Activated naive CD4-positive, alpha-beta T cell treated with anti-CD3 and anti-CD28 coated beads for 36 hours (primary cell): ENCODE measurements at regions of chr19 and their contacts with region 1.

Region 1: DNA sequence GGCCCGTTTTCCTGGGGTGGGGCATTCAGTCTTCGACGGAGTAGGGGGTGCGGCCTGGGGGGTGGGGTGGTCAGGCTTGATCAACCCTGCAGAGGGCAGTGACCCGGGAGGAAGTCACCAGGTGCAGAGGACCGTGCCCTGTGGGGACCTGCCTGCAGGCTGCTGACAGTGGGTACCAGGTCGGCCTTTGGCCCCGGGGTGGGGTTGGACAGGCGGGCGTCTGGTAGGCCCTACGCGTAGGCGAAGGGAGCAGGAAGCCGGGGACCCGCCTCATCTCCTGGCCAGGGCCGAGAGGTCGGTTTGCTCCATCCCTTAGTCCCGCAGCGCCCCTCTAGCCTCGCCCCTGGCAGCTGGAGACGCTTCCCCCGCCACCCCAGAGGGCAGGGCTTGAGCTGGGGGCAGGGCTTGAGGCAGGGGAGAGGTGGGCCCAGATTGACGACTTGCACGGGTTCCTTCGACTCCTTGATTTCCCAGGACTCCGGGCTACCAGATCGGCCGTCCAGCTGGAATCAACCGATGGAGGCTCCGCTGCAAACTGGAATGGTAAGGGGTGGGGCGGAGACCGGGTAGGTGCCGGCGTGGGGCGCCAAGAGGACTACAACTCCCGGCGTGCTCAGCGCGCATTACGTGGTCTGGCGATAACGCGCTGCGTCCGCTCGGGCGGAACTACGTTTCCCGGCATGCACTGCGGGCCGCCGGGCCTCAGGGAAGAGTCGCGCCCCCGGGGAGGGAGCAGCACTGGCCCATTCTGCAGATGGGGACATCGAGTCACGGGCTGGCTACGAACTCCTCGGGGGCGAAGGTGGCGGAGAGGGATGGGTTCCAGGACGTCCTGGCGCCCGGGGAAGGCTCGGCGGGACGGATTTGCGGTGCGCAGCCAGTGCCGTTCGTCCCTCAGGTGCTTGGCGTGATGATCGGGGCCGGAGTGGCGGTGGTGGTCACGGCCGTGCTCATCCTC is at the start of gene PNPLA6:
- DNase-seq: peak; percentile 95
- H3K4me3 Mint-ChIP-seq: peak within 1 kb of the TSS; percentile 92
- H3K27ac Mint-ChIP-seq: peak within 1 kb of the TSS; percentile 84
- H3K4me1 Mint-ChIP-seq: peaks cover 20% of the 10 kb centered on the region
- H3K27me3 Mint-ChIP-seq: no peaks in the 10 kb centered on the region
- total RNA-seq, gene PNPLA6: 75.5 to 81.7 TPM

Region 2: GRCh38 chr19:7355151-7355820 is 180.0 kb before region 1 on chr19:
- CTCF ChIA-PET with region 1: interaction called, 5 read pairs
- intact Hi-C with region 1: loop called (anchors 2 kb)
- DNase-seq: no peak
- H3K4me3 Mint-ChIP-seq: no peak overlapping the region
- H3K27ac Mint-ChIP-seq: no peak overlapping the region
- H3K4me1 Mint-ChIP-seq: peaks cover 49% of the 10 kb centered on the region
- H3K27me3 Mint-ChIP-seq: no peaks in the 10 kb centered on the region

Region 3: GRCh38 chr19:7394731-7395359 is 140.5 kb before region 1 on chr19:
- CTCF ChIA-PET with region 1: no interaction called
- intact Hi-C with region 1: loop called (anchors 2 kb)
- DNase-seq: peak; percentile 89
- H3K4me3 Mint-ChIP-seq: peak overlapping the region; percentile 90
- H3K27ac Mint-ChIP-seq: peak overlapping the region; percentile 69
- H3K4me1 Mint-ChIP-seq: peaks cover 30% of the 10 kb centered on the region
- H3K27me3 Mint-ChIP-seq: no peaks in the 10 kb centered on the region

Region 4: GRCh38 chr19:7488736-7489353 is 46.5 kb before region 1 on chr19 and contains the start of gene PEX11G:
- CTCF ChIA-PET with region 1: no interaction called
- intact Hi-C with region 1: loop called (anchors 2 kb)
- DNase-seq: peak; percentile 90
- H3K4me3 Mint-ChIP-seq: peak within 1 kb of the TSS; percentile 78
- H3K27ac Mint-ChIP-seq: peak within 1 kb of the TSS; percentile 71
- H3K4me1 Mint-ChIP-seq: peaks cover 14% of the 10 kb centered on the region
- H3K27me3 Mint-ChIP-seq: no peaks in the 10 kb centered on the region
- total RNA-seq, gene PEX11G: 0.86 to 1.1 TPM

Region 5: GRCh38 chr19:7522072-7522922 is 13.0 kb before region 1 on chr19 and contains the start of gene MCOLN1:
- CTCF ChIA-PET with region 1: interaction called, 5 read pairs
- intact Hi-C with region 1: loop called (anchors 1 kb)
- DNase-seq: peak; percentile 99
- H3K4me3 Mint-ChIP-seq: peak within 1 kb of the TSS; percentile 72
- H3K27ac Mint-ChIP-seq: peak within 1 kb of the TSS; percentile 63
- H3K4me1 Mint-ChIP-seq: peaks cover 11% of the 10 kb centered on the region
- H3K27me3 Mint-ChIP-seq: no peaks in the 10 kb centered on the region
- total RNA-seq, gene MCOLN1: 4.2 to 5.2 TPM

Region 6: GRCh38 chr19:7629347-7630054 is 94.2 kb after region 1 on chr19 and contains the starts of genes PET100 and XAB2:
- CTCF ChIA-PET with region 1: no interaction called
- intact Hi-C with region 1: loop called (anchors 1 kb)
- DNase-seq: peak; percentile 97
- H3K4me3 Mint-ChIP-seq: peak within 1 kb of the TSS; percentile 98
- H3K27ac Mint-ChIP-seq: peak within 1 kb of the TSS; percentile 97
- H3K4me1 Mint-ChIP-seq: peaks cover 42% of the 10 kb centered on the region
- H3K27me3 Mint-ChIP-seq: no peaks in the 10 kb centered on the region
- total RNA-seq, gene PET100: 93.9 to 96.5 TPM
- total RNA-seq, gene XAB2: 60.0 to 60.4 TPM

Region 7: DNA sequence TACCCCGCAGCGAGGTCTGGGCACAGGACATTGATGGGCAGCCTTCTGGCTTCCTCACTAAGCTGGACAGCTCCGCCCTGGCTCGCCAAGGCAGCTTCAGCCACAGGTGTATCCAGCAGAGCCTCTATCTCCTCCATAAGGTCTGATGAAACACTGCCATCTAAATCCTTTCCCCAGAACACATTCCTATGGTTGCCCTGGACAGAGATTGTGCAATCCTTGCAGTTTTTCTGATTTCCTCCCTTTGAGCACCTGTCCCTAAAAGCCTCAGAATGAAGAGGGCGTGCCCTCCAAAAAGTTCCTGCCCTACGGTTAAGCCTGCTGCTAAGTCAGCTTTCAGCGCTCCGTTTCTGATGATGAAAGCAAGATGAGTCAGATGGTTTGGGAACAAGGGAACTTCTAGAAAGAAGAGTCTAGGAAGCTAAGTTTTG is 248.7 kb after region 1 on chr19:
- CTCF ChIA-PET with region 1: no interaction called
- intact Hi-C with region 1: no loop called
- DNase-seq: no peak
- H3K4me3 Mint-ChIP-seq: no peak overlapping the region
- H3K27ac Mint-ChIP-seq: no peak overlapping the region
- H3K4me1 Mint-ChIP-seq: peaks cover 12% of the 10 kb centered on the region
- H3K27me3 Mint-ChIP-seq: peaks cover 41% of the 10 kb centered on the region